ENCODE measurements at regions of chr11 and their contacts with region 1.

Region 1: GRCh38 chr11:64204464-64204989 is 2.0 kb upstream of the FERMT3 start:
- DNase-seq: peak; percentile 95
- H3K4me3 ChIP-seq: no peak overlapping the region
- H3K27ac ChIP-seq: no peak overlapping the region
- H3K27me3 ChIP-seq: no peaks in the 10 kb centered on the region
- CTCF ChIP-seq: peak; percentile 67

Region 2: GRCh38 chr11:64173616-64174355 is 30.7 kb before region 1 on chr11:
- CTCF ChIA-PET with region 1: no interaction called
- POLR2A ChIA-PET with region 1: no interaction called
- DNase-seq: no peak
- H3K4me3 ChIP-seq: no peak overlapping the region
- H3K27ac ChIP-seq: no peak overlapping the region
- H3K27me3 ChIP-seq: no peaks in the 10 kb centered on the region
- CTCF ChIP-seq: no peak

Region 3: DNA sequence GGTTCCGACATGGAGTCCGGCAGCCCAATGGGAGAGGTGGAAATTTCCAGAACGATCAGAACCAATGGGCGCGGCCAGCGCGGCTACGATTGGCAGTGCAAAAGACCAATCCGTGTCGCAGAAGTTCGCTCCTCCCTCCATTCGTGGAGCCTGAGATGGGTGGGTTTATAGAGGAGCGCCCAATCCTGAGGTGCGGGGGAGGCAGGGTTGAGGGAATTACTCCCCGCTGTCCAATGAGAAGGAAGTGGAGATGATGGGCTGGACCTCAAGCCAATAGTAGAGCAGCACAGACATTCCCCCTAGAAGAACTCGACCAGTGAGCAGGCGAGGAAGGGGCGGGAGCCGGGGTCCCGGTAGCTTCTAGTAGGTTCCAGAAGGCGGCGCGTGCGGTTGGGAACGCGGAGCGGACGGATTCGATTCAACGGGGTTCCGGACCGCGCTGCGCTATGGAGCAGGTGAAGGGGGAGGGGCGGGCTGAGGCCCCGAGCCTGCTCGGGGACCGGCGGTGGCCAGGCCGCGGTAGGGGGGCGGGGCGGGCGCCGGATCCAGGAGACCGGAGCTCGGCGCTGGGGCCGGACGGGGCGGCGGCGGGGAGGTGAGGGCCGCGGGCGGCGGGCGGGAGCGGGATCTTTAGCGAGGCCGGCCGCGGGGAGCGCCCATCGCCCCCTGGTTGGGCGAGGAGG is 18.6 kb before region 1 on chr11 and contains the start of gene STIP1:
- CTCF ChIA-PET with region 1: interaction called, 13 read pairs
- POLR2A ChIA-PET with region 1: interaction called, 27 read pairs
- DNase-seq: peak; percentile 100
- H3K4me3 ChIP-seq: peak within 1 kb of the TSS; percentile 75
- H3K27ac ChIP-seq: peak within 1 kb of the TSS; percentile 96
- H3K27me3 ChIP-seq: no peaks in the 10 kb centered on the region
- CTCF ChIP-seq: peak; percentile 52
- polyA plus RNA-seq, gene STIP1: 166 and 171 TPM in 2 replicates

Region 4: GRCh38 chr11:64216879-64217278 is 12.4 kb after region 1 on chr11:
- CTCF ChIA-PET with region 1: interaction called, 34 read pairs
- POLR2A ChIA-PET with region 1: interaction called, 8 read pairs
- DNase-seq: no peak
- H3K4me3 ChIP-seq: no peak overlapping the region
- H3K27ac ChIP-seq: no peak overlapping the region
- H3K27me3 ChIP-seq: no peaks in the 10 kb centered on the region
- CTCF ChIP-seq: no peak

Region 5: DNA sequence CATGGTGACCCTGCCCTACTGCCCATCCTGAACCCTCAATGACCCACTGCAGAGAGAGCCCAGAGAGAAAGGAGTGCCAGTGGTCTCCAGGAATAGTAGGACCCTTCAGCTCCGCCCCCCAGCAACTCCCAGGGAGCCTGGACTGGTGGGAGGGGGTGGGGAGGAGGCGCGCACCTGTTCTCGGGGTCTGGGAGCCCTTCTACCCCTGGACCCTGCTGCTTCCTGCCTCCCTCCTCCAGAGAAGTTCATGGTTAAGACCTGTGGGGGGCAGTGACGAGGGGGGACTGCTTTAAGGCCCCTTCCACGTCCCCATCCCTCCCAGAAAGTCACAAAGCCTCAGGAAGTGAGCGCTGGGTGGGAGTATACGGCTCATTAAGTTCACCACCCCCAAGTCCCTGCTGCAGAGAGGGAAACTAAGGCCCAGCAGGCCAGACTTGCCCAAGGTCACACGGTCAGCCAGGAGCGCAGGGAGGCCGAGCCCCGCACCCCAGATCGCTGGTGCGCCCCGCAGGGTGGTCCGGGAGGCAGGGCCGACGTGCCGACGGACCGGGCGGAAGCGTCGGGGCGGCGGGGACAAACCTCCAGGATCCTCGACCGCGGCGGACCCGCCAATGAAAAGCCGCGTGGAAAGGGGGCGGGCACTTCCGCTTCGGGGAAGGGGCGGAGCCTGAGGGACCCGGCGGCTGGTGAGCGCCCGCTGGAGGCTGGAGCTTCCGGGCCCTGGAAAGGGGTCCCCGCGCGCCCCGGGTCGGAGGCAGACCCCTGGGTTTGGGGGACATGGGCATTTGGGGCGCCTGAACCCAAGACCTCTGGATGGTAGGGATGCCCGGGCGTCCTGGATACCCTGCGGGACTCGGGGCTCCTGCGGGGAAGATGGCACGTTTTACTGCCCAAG is 21.3 kb after region 1 on chr11 and contains the starts of genes NUDT22 and TRPT1:
- CTCF ChIA-PET with region 1: interaction called, 13 read pairs
- POLR2A ChIA-PET with region 1: interaction called, 6 read pairs
- DNase-seq: peak; percentile 27
- H3K4me3 ChIP-seq: peak within 1 kb of the TSS; percentile 89
- H3K27ac ChIP-seq: peak within 1 kb of the TSS; percentile 21
- H3K27me3 ChIP-seq: no peaks in the 10 kb centered on the region
- CTCF ChIP-seq: peak; percentile 21
- polyA plus RNA-seq, gene NUDT22: 18.8 and 29.1 TPM in 2 replicates
- polyA plus RNA-seq, gene TRPT1: 21.6 and 34.0 TPM in 2 replicates

Region 6: DNA sequence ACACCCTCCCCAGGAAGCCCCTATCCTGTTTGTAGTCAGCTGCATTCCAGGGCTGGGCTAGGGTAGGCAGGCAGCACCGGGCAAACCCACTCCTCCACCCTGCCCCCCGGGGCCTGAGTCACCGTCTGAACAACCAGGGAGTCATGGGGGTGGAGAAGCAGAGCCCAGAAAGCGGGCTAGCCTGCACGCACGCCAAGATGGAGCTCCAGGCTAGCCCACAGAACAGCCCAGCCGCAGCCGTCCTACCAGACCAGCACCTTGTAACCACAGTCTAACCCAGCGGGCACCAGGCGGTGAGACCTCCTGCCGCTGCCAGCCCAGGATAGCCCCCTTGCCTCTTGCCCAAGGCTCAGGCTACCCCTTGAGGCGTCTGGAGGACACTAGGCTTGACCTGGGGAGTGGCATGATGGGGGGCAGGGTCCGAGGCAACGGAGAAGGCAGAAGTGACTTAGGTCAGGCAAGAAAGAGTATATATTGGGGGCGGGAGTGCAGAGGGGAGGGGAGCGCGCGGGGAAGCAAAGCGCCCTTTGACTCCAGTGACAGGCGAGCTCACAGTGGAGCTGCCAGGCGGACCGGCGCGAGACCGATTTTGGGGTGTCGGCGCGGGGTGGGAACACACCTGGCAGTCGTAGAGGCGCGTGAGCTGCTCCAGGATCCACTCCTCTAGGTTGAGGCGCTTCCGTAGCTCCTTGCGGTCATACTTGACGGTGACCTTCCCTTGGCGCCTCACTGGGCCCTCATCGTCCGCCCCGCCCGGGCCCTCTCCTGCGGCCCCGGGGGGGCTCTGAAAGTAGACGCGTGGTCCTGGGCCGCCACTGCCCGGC is 41.5 kb after region 1 on chr11:
- CTCF ChIA-PET with region 1: interaction called, 22 read pairs
- POLR2A ChIA-PET with region 1: interaction called, 5 read pairs
- DNase-seq: peak; percentile 50
- H3K4me3 ChIP-seq: peak overlapping the region; percentile 98
- H3K27ac ChIP-seq: peak overlapping the region; percentile 77
- H3K27me3 ChIP-seq: no peaks in the 10 kb centered on the region
- CTCF ChIP-seq: no peak

Region 7: GRCh38 chr11:64251016-64251752 is 46.7 kb after region 1 on chr11 and contains the start of gene PLCB3:
- CTCF ChIA-PET with region 1: interaction called, 22 read pairs
- POLR2A ChIA-PET with region 1: interaction called, 4 read pairs
- DNase-seq: no peak
- H3K4me3 ChIP-seq: peak within 1 kb of the TSS; percentile 77
- H3K27ac ChIP-seq: peak within 1 kb of the TSS; percentile 11
- H3K27me3 ChIP-seq: no peaks in the 10 kb centered on the region
- CTCF ChIP-seq: peak; percentile 53
- polyA plus RNA-seq, gene PLCB3: 11.7 and 13.0 TPM in 2 replicates

Measured in AG04450 (cell line).